Activated CD8-positive, alpha-beta T cell treated with anti-CD3 and anti-CD28 coated beads, Interleukin-2, amount 10 ng/mL, durations not matched to agents 7 days and 5 days (primary cell): ENCODE measurements at regions of chr15 and their contacts with region 1.

Region 1: GRCh38 chr15:90603893-90604292 is 74.2 kb downstream of the CRTC3 start:
- DNase-seq: peak; percentile 67
- ATAC-seq: no peak
- H3K4me3 Mint-ChIP-seq: no peak overlapping the region
- H3K27ac Mint-ChIP-seq: peak overlapping the region; percentile 19
- H3K4me1 Mint-ChIP-seq: peaks cover 47% of the 10 kb centered on the region
- H3K27me3 Mint-ChIP-seq: no peaks in the 10 kb centered on the region

Region 2: GRCh38 chr15:90564051-90564450 is 39.8 kb before region 1 on chr15:
- CTCF ChIA-PET with region 1: interaction called, 19 read pairs
- POLR2A ChIA-PET with region 1: interaction called, 15 read pairs
- DNase-seq: no peak
- ATAC-seq: peak; percentile 15
- H3K4me3 Mint-ChIP-seq: peak overlapping the region; percentile 51
- H3K27ac Mint-ChIP-seq: peak overlapping the region; percentile 99
- H3K4me1 Mint-ChIP-seq: peaks cover 95% of the 10 kb centered on the region
- H3K27me3 Mint-ChIP-seq: no peaks in the 10 kb centered on the region

Region 3: GRCh38 chr15:90762109-90762508 is 158.2 kb after region 1 on chr15:
- CTCF ChIA-PET with region 1: no interaction called
- POLR2A ChIA-PET with region 1: no interaction called
- DNase-seq: no peak
- ATAC-seq: no peak
- H3K4me3 Mint-ChIP-seq: no peak overlapping the region
- H3K27ac Mint-ChIP-seq: no peak overlapping the region
- H3K4me1 Mint-ChIP-seq: peaks cover 5% of the 10 kb centered on the region
- H3K27me3 Mint-ChIP-seq: no peaks in the 10 kb centered on the region